ENCODE measurements at regions of chr20 and their contacts with region 1.

Region 1: GRCh38 chr20:31751126-31751525 is 12.0 kb downstream of the TPX2 start:
- DNase-seq: peak; percentile 97
- ATAC-seq: peak; percentile 81
- H3K4me3 ChIP-seq: no peak overlapping the region
- H3K27ac ChIP-seq: peak overlapping the region; percentile 91; the same call in 1 of the 2 replicates
- H3K4me1 ChIP-seq: peaks cover 12% of the 10 kb centered on the region
- H3K27me3 ChIP-seq: no peaks in the 10 kb centered on the region
- CTCF ChIP-seq: no peak
- POLR2A ChIP-seq: no peak
- RAD21 ChIP-seq: no peak

Region 2: GRCh38 chr20:31560094-31560899 is 190.8 kb before region 1 on chr20:
- CTCF ChIA-PET with region 1: interaction called, 10 read pairs
- POLR2A ChIA-PET with region 1: no interaction called
- dilution Hi-C with region 1: no loop called
- in situ Hi-C with region 1: no loop called
- intact Hi-C with region 1: no loop called
- DNase-seq: peak; percentile 86
- ATAC-seq: peak; percentile 48
- H3K4me3 ChIP-seq: no peak overlapping the region
- H3K27ac ChIP-seq: peak overlapping the region; percentile 76
- H3K4me1 ChIP-seq: peaks cover 18% of the 10 kb centered on the region
- H3K27me3 ChIP-seq: no peaks in the 10 kb centered on the region
- CTCF ChIP-seq: peak; percentile 91
- POLR2A ChIP-seq: no peak; the same call in 1 of the 2 replicates
- RAD21 ChIP-seq: peak; percentile 60

Region 3: DNA sequence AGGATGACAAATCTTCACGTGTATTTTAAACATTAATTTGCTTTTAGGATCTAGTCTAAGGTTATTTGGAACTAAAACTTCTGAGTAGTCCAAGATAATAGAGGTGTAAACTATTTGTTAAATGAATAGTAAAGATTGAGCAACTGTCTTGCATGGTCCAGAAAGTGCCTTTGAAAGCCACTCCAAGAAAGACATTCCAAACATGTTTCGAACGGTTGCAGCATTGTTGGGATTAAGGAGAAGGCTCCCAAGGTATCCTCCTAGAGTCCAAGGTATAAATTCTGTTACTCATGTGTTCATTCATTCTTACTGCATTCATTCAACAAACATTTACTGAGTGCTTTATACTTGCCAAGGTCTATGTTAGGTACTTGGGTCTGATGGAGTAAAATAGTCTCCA is 39.3 kb after region 1 on chr20:
- CTCF ChIA-PET with region 1: no interaction called
- POLR2A ChIA-PET with region 1: no interaction called
- dilution Hi-C with region 1: no loop called
- in situ Hi-C with region 1: no loop called
- intact Hi-C with region 1: loop called (anchors 5 kb)
- DNase-seq: no peak
- ATAC-seq: peak; percentile 32; the same call in 1 of the 2 replicates
- H3K4me3 ChIP-seq: no peak overlapping the region
- H3K27ac ChIP-seq: no peak overlapping the region
- H3K4me1 ChIP-seq: peaks cover 2% of the 10 kb centered on the region
- H3K27me3 ChIP-seq: no peaks in the 10 kb centered on the region
- CTCF ChIP-seq: no peak
- POLR2A ChIP-seq: no peak
- RAD21 ChIP-seq: no peak

Measured in IMR-90 (cell line).